ENCODE measurements at regions of chr11 and their contacts with region 1.

Region 1: DNA sequence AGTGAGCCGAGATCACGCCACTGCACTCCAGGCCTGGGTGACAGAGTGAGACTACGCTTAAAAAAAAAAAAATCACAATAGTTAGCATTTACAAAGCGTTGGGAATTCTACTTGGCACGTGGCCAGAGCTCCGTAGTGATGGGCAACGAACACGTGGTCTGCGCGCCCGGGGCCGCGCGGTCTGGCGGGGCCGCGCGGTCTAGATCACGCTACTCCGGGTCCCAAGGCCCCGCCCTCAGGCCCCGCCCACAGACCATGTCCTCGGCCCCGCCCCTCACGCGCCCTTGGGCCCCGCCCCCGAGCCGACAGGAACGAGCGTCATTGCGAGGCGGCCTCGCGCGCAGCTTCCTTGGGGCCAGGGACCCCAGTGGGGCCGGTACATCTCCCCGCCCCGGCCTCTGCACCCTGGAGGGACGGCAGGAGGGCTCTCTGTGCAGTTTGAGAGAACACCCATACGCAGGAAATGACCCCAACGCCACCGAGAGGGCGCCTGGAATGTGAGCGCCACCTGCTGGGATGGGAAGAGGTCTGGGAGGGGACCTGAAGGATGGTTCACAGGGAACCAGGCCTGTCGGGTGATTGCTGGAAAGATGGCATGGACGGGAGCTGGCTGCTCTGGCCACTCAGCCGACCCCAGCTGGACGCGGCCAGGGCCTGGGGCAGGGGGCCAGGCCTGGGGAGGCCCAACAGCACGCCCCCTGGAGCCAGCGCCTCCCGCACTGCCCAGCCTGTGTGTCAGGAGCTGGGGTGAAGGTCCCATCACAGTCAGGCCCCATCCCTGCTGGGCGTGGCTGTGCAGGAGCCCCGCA is 2.0 kb upstream of the PTDSS2 start:
- DNase-seq: peak; percentile 97
- ATAC-seq: peak; percentile 83 to 89 (median 87)
- H3K4me3 ChIP-seq: peak overlapping the region; percentile 81
- H3K27ac ChIP-seq: peak overlapping the region; percentile 96
- H3K4me1 ChIP-seq: peaks cover 27% of the 10 kb centered on the region
- H3K27me3 ChIP-seq: peaks cover 0 to 15% (median 6%) of the 10 kb centered on the region in 3 donors
- CTCF ChIP-seq: peak; percentile 76

Region 2: DNA sequence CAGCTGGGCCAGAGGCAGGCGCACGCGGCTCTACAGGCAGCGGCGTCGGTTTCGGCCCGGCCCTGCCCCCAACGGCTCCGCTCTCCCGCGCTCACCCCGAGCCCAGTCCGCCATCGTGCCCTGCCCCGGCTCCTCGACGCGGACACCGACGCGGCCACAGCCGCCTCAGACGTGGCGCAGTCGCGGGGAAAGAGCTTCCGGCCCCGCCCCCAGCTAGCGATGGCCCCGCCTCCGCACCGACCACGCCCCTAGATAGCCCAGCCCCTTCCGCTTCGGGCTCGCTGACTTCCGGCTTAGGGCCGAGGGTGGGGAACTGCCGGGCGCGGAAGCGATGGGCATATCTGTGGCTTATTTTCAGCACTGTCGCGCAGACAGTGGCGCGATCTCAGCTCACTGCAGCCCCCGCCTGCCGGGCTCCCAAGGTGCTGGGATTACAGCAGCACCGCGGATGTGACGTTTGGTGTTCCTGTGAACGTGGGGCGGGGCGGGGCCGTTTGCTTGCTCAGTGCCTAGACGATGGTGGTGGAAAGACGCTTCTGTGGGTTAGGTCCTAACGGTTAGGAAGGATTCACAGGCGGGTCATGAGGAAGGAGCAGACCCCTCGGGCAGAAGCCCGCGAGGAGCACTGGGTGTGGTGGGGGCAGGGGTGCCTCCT is 240.8 kb before region 1 on chr11 and contains the starts of genes BET1L and RIC8A:
- intact Hi-C with region 1: loop called in 1 of 2 experiments (anchors 5 kb)
- DNase-seq: peak; percentile 93 to 99
- ATAC-seq: peak; percentile 91 to 93 (median 92)
- H3K4me3 ChIP-seq: peak within 1 kb of the TSS; percentile 97
- H3K27ac ChIP-seq: peak within 1 kb of the TSS; percentile 99
- H3K4me1 ChIP-seq: peaks cover 24% of the 10 kb centered on the region
- H3K27me3 ChIP-seq: no peaks in the 10 kb centered on the region
- CTCF ChIP-seq: no peak
- total RNA-seq, gene BET1L: 11.8 to 27.7 (median 20.2) TPM
- total RNA-seq, gene RIC8A: 34.4 to 54.8 (median 37.9) TPM

Region 3: DNA sequence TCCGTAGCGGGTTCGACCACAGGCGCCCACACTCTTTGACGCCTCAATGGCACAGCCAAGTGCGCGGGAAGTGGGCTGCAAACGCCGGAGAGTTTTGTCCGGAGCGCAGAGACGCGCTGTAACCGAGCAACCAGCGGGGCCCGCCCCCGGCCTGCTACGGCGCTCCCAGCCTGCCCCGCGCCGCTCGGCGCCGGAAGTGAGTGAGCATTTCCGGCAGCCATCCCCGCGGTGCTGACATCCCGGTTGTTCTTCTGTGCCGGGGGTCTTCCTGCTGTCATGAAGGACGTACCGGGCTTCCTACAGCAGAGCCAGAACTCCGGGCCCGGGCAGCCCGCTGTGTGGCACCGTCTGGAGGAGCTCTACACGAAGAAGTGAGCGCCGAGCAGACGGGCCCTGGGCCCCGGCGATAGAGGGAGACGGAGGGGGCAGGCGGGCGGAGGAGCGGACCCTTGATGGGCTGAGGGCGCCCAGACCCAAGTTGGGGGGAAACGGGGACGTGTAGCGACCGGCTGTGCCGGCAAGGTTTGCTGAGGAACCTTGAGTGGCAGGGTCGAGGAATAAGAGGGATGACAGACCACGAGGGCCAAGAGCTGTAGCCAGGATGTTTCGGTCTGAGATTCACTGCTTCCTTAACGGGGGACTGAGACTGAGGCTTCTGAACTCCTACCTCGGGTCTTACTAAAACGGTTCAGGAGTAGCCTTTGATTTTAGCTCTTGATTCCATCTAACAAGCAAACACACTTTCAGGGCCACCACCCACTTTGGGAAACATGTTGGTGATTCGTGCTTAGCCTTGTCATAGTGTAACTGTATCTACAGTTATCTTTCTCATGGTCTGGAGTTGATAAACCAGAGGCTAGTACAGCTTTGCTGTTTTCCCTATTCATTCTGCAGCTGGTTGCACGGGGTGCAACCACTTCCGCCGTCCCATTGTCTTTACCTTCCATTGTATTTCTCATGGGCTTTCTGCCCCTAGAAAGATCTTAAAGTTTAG is 211.1 kb before region 1 on chr11 and contains the start of gene PSMD13:
- intact Hi-C with region 1: loop called in 1 of 2 experiments (anchors 5 kb)
- DNase-seq: peak; percentile 88 to 94
- ATAC-seq: peak; percentile 91 to 95 (median 92)
- H3K4me3 ChIP-seq: peak within 1 kb of the TSS; percentile 86
- H3K27ac ChIP-seq: peak within 1 kb of the TSS; percentile 92
- H3K4me1 ChIP-seq: peaks cover 45% of the 10 kb centered on the region
- H3K27me3 ChIP-seq: no peaks in the 10 kb centered on the region
- CTCF ChIP-seq: no peak
- total RNA-seq, gene PSMD13: 108 to 190 (median 149) TPM

Region 4: GRCh38 chr11:409693-410483 is 38.2 kb before region 1 on chr11:
- intact Hi-C with region 1: loop called in 1 of 2 experiments (anchors 2 kb)
- DNase-seq: peak in 1 of 2 donors; percentile 44
- ATAC-seq: no peak
- H3K4me3 ChIP-seq: no peak overlapping the region
- H3K27ac ChIP-seq: no peak overlapping the region
- H3K4me1 ChIP-seq: peaks cover 8% of the 10 kb centered on the region
- H3K27me3 ChIP-seq: peaks cover 0 to 30% (median 0%) of the 10 kb centered on the region in 3 donors
- CTCF ChIP-seq: no peak

Region 5: GRCh38 chr11:506238-506994 is 58.3 kb after region 1 on chr11:
- intact Hi-C with region 1: loop called in 1 of 2 experiments (anchors 5 kb)
- DNase-seq: peak; percentile 99 to 100
- ATAC-seq: peak; percentile 85 to 86 (median 86)
- H3K4me3 ChIP-seq: peak overlapping the region; percentile 92
- H3K27ac ChIP-seq: peak overlapping the region; percentile 100
- H3K4me1 ChIP-seq: peaks cover 30% of the 10 kb centered on the region
- H3K27me3 ChIP-seq: no peaks in the 10 kb centered on the region
- CTCF ChIP-seq: no peak

Region 6: DNA sequence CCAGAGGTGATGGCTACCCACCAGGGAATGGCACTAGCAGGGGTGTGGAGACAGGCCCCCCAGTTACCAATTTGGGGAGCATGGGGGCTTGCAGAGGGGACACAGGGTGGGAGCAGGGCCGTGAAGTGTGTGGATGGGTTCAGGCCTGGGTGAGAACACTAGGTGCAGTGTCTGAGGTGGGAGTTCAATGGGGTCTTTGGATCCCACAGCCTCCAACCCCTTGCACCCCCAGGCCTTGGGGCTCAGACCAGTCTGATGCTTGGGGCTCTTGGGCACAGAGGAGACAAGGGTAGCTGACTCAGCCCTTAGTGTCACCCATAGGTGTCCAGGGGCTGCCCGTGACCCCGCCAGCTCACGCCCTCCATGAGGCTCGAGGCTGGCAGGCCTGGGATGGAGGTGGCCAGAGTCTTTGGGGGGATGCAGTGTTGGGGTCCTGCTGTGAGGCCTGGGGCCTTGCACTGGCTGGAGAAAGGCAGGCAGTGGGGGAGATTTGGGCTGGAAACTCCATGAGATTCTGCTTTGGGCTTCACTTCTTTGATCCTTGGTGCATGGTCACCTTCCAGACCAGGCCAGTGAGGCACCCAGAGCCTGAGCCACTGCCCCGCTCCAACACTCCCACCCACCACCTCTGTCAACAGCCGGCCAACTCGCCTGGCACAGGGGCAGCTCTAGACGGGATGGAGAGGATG is 90.0 kb after region 1 on chr11:
- intact Hi-C with region 1: no loop called
- DNase-seq: peak in 1 of 2 donors; percentile 45
- ATAC-seq: no peak
- H3K4me3 ChIP-seq: no peak overlapping the region
- H3K27ac ChIP-seq: no peak overlapping the region
- H3K4me1 ChIP-seq: peaks cover 27% of the 10 kb centered on the region
- H3K27me3 ChIP-seq: peaks cover 0 to 16% (median 0%) of the 10 kb centered on the region in 3 donors
- CTCF ChIP-seq: no peak

Region 7: GRCh38 chr11:680476-680875 is 232.3 kb after region 1 on chr11:
- intact Hi-C with region 1: no loop called
- DNase-seq: no peak
- ATAC-seq: peak in 2 of 4 donors; percentile 22 to 40
- H3K4me3 ChIP-seq: no peak overlapping the region
- H3K27ac ChIP-seq: no peak overlapping the region
- H3K4me1 ChIP-seq: no peaks in the 10 kb centered on the region
- H3K27me3 ChIP-seq: no peaks in the 10 kb centered on the region
- CTCF ChIP-seq: no peak

Region 8: GRCh38 chr11:727859-728748 is 280.0 kb after region 1 on chr11:
- intact Hi-C with region 1: no loop called
- DNase-seq: peak; percentile 88 to 92
- ATAC-seq: peak; percentile 90 to 96 (median 94)
- H3K4me3 ChIP-seq: no peak overlapping the region
- H3K27ac ChIP-seq: peak overlapping the region; percentile 46
- H3K4me1 ChIP-seq: peaks cover 11% of the 10 kb centered on the region
- H3K27me3 ChIP-seq: peaks cover 0 to 40% (median 13%) of the 10 kb centered on the region in 3 donors
- CTCF ChIP-seq: peak; percentile 97